ENCODE measurements at regions of chr20 and their contacts with region 1.

Region 1: DNA sequence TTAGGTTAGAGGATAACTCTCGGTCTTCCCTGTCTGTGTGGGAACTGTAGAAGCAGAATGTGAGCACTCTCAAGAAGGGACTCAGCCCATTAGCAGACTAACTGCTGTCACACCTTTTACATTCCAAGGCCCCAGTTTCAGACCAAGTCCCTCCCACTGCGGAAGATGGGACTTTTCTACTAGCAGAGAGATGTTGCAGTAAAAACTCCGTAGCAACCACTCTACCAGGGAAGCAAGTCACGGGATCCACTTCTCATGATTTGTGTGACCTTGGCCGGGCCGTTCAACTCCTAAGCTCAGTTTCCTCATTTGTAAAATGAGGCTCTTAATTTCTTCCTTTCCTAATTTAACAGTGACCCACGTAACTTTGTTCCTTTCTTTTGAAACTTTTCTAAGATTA is 77.1 kb upstream of the SLC4A11 start:
- DNase-seq: no peak
- H3K4me3 ChIP-seq: no peak overlapping the region
- H3K27ac ChIP-seq: no peak overlapping the region
- H3K4me1 ChIP-seq: peaks cover 50% of the 10 kb centered on the region
- H3K27me3 ChIP-seq: no peaks in the 10 kb centered on the region
- CTCF ChIP-seq: no peak

Region 2: GRCh38 chr20:3115190-3116107 is 200.7 kb before region 1 on chr20:
- CTCF ChIA-PET with region 1: no interaction called
- dilution Hi-C with region 1: no loop called
- in situ Hi-C with region 1: no loop called
- intact Hi-C with region 1: loop called (anchors 5 kb)
- DNase-seq: peak; percentile 37
- H3K4me3 ChIP-seq: no peak overlapping the region
- H3K27ac ChIP-seq: no peak overlapping the region
- H3K4me1 ChIP-seq: no peaks in the 10 kb centered on the region
- H3K27me3 ChIP-seq: no peaks in the 10 kb centered on the region
- CTCF ChIP-seq: peak; percentile 72 to 80

Region 3: GRCh38 chr20:3218307-3218988 is 97.7 kb before region 1 on chr20:
- CTCF ChIA-PET with region 1: no interaction called
- dilution Hi-C with region 1: no loop called
- in situ Hi-C with region 1: no loop called
- intact Hi-C with region 1: loop called (anchors 1 kb)
- DNase-seq: peak; percentile 12
- H3K4me3 ChIP-seq: no peak overlapping the region
- H3K27ac ChIP-seq: no peak overlapping the region
- H3K4me1 ChIP-seq: peaks cover 13% of the 10 kb centered on the region
- H3K27me3 ChIP-seq: no peaks in the 10 kb centered on the region
- CTCF ChIP-seq: peak; percentile 72 to 87

Measured in mammary epithelial cell (primary cell).